Calu3 (cell line): ENCODE measurements at regions of chr12 and their contacts with region 1.

Region 1: GRCh38 chr12:17992002-17992656 is 97.9 kb downstream of the RERGL start:
- DNase-seq: peak; percentile 55
- H3K4me3 Mint-ChIP-seq: no peak overlapping the region
- H3K27ac Mint-ChIP-seq: no peak overlapping the region
- H3K4me1 Mint-ChIP-seq: no peaks in the 10 kb centered on the region
- H3K27me3 Mint-ChIP-seq: no peaks in the 10 kb centered on the region
- CTCF ChIP-seq: peak; percentile 77

Region 2: GRCh38 chr12:17159506-17160300 is 832.4 kb before region 1 on chr12:
- CTCF ChIA-PET with region 1: no interaction called
- intact Hi-C with region 1: loop called (anchors 1 kb)
- DNase-seq: no peak
- H3K4me3 Mint-ChIP-seq: no peak overlapping the region
- H3K27ac Mint-ChIP-seq: no peak overlapping the region
- H3K4me1 Mint-ChIP-seq: no peaks in the 10 kb centered on the region
- H3K27me3 Mint-ChIP-seq: no peaks in the 10 kb centered on the region
- CTCF ChIP-seq: no peak

Region 3: DNA sequence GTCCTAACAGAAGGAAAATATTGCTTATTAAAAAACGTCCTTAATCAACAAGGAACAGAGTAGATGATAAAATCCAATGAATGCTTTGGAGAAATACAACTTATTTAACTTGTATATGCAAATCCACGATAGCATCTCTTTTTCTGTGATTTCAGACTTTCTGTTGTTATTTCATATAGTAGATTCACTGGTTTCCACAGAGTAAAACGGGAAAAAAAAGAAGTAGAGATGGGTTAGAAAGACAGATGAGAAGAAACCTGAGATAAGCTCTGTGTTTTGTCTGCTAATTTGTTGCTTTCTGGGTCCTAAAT is 349.8 kb before region 1 on chr12:
- CTCF ChIA-PET with region 1: no interaction called
- intact Hi-C with region 1: loop called (anchors 10 kb)
- DNase-seq: no peak
- H3K4me3 Mint-ChIP-seq: peak overlapping the region; percentile 57
- H3K27ac Mint-ChIP-seq: no peak overlapping the region
- H3K4me1 Mint-ChIP-seq: no peaks in the 10 kb centered on the region
- H3K27me3 Mint-ChIP-seq: no peaks in the 10 kb centered on the region
- CTCF ChIP-seq: no peak

Region 4: GRCh38 chr12:18101043-18101442 is 108.9 kb after region 1 on chr12:
- CTCF ChIA-PET with region 1: no interaction called
- intact Hi-C with region 1: no loop called
- DNase-seq: no peak
- H3K4me3 Mint-ChIP-seq: no peak overlapping the region
- H3K27ac Mint-ChIP-seq: no peak overlapping the region
- H3K4me1 Mint-ChIP-seq: no peaks in the 10 kb centered on the region
- H3K27me3 Mint-ChIP-seq: no peaks in the 10 kb centered on the region
- CTCF ChIP-seq: no peak

Region 5: DNA sequence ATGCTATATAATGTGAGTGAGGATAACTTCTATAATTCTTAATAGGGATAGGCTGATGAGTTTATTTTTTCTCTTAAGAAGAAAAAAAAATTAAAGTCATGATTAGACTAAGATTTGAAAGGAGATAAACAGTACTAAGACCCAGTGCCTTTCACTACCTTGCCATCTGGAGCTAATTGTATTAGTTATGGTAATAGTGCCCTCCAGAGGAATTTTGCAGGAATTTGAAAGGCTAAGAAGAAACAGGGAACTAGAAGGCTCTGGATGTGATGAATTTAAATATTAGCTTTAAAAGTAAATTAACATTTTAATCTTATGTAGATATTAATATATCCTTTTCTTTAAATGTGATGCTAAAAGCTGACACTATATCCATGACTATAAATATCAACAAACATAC is 232.6 kb after region 1 on chr12:
- CTCF ChIA-PET with region 1: no interaction called
- intact Hi-C with region 1: loop called (anchors 10 kb)
- DNase-seq: no peak
- H3K4me3 Mint-ChIP-seq: no peak overlapping the region
- H3K27ac Mint-ChIP-seq: no peak overlapping the region
- H3K4me1 Mint-ChIP-seq: peaks cover 10% of the 10 kb centered on the region
- H3K27me3 Mint-ChIP-seq: no peaks in the 10 kb centered on the region
- CTCF ChIP-seq: peak; percentile 56

Region 6: DNA sequence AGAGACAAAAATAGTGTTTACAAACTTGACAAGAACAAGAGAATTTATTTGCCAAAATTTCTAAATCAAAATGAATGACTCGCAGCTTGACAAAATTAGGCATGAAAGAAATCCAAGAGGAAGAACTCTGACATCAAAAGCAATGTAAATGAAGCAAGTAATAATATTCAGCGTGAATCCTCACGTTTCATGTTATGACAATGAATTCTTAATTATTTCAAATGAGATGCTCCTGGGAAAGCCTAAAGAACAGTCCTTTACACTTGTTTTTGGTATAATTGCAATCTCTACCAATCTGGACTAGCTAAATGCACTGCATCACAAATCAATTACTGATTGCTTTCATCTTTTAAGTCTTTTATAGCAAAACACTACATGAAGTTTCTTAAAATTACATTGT is 298.3 kb after region 1 on chr12:
- CTCF ChIA-PET with region 1: no interaction called
- intact Hi-C with region 1: no loop called
- DNase-seq: no peak
- H3K4me3 Mint-ChIP-seq: no peak overlapping the region
- H3K27ac Mint-ChIP-seq: no peak overlapping the region
- H3K4me1 Mint-ChIP-seq: peaks cover 19% of the 10 kb centered on the region
- H3K27me3 Mint-ChIP-seq: no peaks in the 10 kb centered on the region
- CTCF ChIP-seq: no peak